IMR-90 (cell line): ENCODE measurements at regions of chr11 and their contacts with region 1.

Region 1: GRCh38 chr11:66694732-66695207 is 17.1 kb upstream of the RBM4B start:
- DNase-seq: peak; percentile 98
- ATAC-seq: peak; percentile 99
- H3K4me3 ChIP-seq: no peak overlapping the region
- H3K27ac ChIP-seq: no peak overlapping the region
- H3K4me1 ChIP-seq: no peaks in the 10 kb centered on the region
- H3K27me3 ChIP-seq: no peaks in the 10 kb centered on the region; the same call in 1 of the 2 replicates
- CTCF ChIP-seq: peak; percentile 98
- POLR2A ChIP-seq: peak; percentile 61
- RAD21 ChIP-seq: peak; percentile 90

Region 2: DNA sequence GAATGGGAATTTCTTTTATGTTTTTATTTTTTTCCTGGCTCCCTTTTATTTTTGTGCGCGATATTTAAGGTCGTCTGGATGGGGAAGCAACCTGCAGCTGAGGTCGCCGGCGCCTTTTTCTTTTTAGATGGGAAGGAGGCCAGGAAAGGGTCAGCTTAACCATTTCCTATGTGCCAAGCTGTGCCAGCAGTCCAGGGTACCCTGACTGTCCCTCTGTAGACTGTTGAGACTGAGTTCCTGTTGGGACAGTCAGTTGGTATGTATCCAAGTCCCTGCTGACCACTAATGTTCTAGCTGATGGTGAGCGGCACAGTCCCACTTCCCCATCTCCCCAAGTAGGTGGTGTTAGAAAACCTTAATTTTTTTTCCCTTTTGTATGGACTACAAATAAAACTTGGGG is 67.8 kb before region 1 on chr11:
- CTCF ChIA-PET with region 1: no interaction called
- POLR2A ChIA-PET with region 1: no interaction called
- dilution Hi-C with region 1: no loop called
- in situ Hi-C with region 1: no loop called
- intact Hi-C with region 1: no loop called
- DNase-seq: no peak
- ATAC-seq: no peak
- H3K4me3 ChIP-seq: no peak overlapping the region
- H3K27ac ChIP-seq: no peak overlapping the region
- H3K4me1 ChIP-seq: peaks cover 2% of the 10 kb centered on the region; the same call in 1 of the 2 replicates
- H3K27me3 ChIP-seq: no peaks in the 10 kb centered on the region
- CTCF ChIP-seq: no peak
- POLR2A ChIP-seq: no peak
- RAD21 ChIP-seq: no peak

Region 3: GRCh38 chr11:66720223-66720947 is 25.6 kb after region 1 on chr11:
- CTCF ChIA-PET with region 1: no interaction called
- POLR2A ChIA-PET with region 1: no interaction called
- dilution Hi-C with region 1: no loop called
- in situ Hi-C with region 1: no loop called
- intact Hi-C with region 1: no loop called
- DNase-seq: peak; percentile 56
- ATAC-seq: no peak; the same call in none of the 2 replicates
- H3K4me3 ChIP-seq: no peak overlapping the region
- H3K27ac ChIP-seq: no peak overlapping the region
- H3K4me1 ChIP-seq: peaks cover 2% of the 10 kb centered on the region; the same call in 1 of the 2 replicates
- H3K27me3 ChIP-seq: peaks cover 26% of the 10 kb centered on the region
- CTCF ChIP-seq: no peak
- POLR2A ChIP-seq: no peak
- RAD21 ChIP-seq: no peak

Region 4: GRCh38 chr11:66883016-66883968 is 188.5 kb after region 1 on chr11:
- CTCF ChIA-PET with region 1: no interaction called
- POLR2A ChIA-PET with region 1: no interaction called
- dilution Hi-C with region 1: no loop called
- in situ Hi-C with region 1: no loop called
- intact Hi-C with region 1: loop called (anchors 1 kb)
- DNase-seq: peak; percentile 86
- ATAC-seq: peak; percentile 82
- H3K4me3 ChIP-seq: no peak overlapping the region
- H3K27ac ChIP-seq: peak overlapping the region; percentile 47
- H3K4me1 ChIP-seq: peaks cover 44% of the 10 kb centered on the region
- H3K27me3 ChIP-seq: no peaks in the 10 kb centered on the region
- CTCF ChIP-seq: peak; percentile 51
- POLR2A ChIP-seq: no peak
- RAD21 ChIP-seq: peak; percentile 52

Region 5: GRCh38 chr11:66976048-66976467 is 281.3 kb after region 1 on chr11:
- CTCF ChIA-PET with region 1: no interaction called
- POLR2A ChIA-PET with region 1: no interaction called
- dilution Hi-C with region 1: no loop called
- in situ Hi-C with region 1: loop called (anchors 5 kb)
- intact Hi-C with region 1: loop called (anchors 1 kb)
- DNase-seq: no peak
- ATAC-seq: peak; percentile 38
- H3K4me3 ChIP-seq: no peak overlapping the region
- H3K27ac ChIP-seq: no peak overlapping the region
- H3K4me1 ChIP-seq: peaks cover 19% of the 10 kb centered on the region
- H3K27me3 ChIP-seq: no peaks in the 10 kb centered on the region
- CTCF ChIP-seq: peak; percentile 67
- POLR2A ChIP-seq: no peak
- RAD21 ChIP-seq: peak; percentile 85